A673 (cell line): ENCODE measurements at regions of chr2 and their contacts with region 1.

Region 1: GRCh38 chr2:175726223-175726622 is 275.8 kb downstream of the LNPK start:
- DNase-seq: no peak
- H3K4me3 ChIP-seq: no peak overlapping the region
- H3K27ac ChIP-seq: no peak overlapping the region
- H3K4me1 ChIP-seq: no peaks in the 10 kb centered on the region
- H3K27me3 ChIP-seq: no peaks in the 10 kb centered on the region
- CTCF ChIP-seq: no peak

Region 2: GRCh38 chr2:174827371-174828369 is 898.6 kb before region 1 on chr2:
- CTCF ChIA-PET with region 1: no interaction called
- POLR2A ChIA-PET with region 1: no interaction called
- intact Hi-C with region 1: no loop called
- DNase-seq: no peak
- H3K4me3 ChIP-seq: no peak overlapping the region
- H3K27ac ChIP-seq: no peak overlapping the region
- H3K4me1 ChIP-seq: no peaks in the 10 kb centered on the region
- H3K27me3 ChIP-seq: no peaks in the 10 kb centered on the region
- CTCF ChIP-seq: no peak

Region 3: DNA sequence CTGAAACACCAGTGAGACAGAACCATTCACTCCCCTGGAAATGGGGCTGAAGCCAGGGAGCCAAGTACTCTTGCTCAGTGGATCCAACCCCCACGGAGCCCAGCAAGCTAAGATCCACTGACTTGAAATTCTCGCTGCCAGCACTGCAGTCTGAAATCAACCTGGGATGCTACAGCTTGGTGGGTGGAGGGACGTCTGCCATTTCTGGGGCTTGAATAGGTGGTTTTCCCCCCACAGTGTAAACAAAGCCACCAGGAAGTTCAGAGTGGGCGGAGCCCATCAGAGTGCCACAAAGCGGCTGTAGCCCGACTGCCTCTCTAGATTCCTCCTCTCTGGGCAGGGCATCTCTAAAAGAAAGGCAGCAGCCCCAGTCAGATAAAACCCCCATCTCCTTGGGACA is 17.0 kb before region 1 on chr2:
- CTCF ChIA-PET with region 1: no interaction called
- POLR2A ChIA-PET with region 1: interaction called, 10 read pairs
- intact Hi-C with region 1: no loop called
- DNase-seq: no peak
- H3K4me3 ChIP-seq: no peak overlapping the region
- H3K27ac ChIP-seq: no peak overlapping the region
- H3K4me1 ChIP-seq: no peaks in the 10 kb centered on the region
- H3K27me3 ChIP-seq: peaks cover 2% of the 10 kb centered on the region
- CTCF ChIP-seq: no peak

Region 4: GRCh38 chr2:175755169-175755568 is 28.9 kb after region 1 on chr2:
- CTCF ChIA-PET with region 1: no interaction called
- POLR2A ChIA-PET with region 1: no interaction called
- intact Hi-C with region 1: no loop called
- DNase-seq: no peak
- H3K4me3 ChIP-seq: no peak overlapping the region
- H3K27ac ChIP-seq: no peak overlapping the region
- H3K4me1 ChIP-seq: no peaks in the 10 kb centered on the region
- H3K27me3 ChIP-seq: no peaks in the 10 kb centered on the region
- CTCF ChIP-seq: no peak

Region 5: DNA sequence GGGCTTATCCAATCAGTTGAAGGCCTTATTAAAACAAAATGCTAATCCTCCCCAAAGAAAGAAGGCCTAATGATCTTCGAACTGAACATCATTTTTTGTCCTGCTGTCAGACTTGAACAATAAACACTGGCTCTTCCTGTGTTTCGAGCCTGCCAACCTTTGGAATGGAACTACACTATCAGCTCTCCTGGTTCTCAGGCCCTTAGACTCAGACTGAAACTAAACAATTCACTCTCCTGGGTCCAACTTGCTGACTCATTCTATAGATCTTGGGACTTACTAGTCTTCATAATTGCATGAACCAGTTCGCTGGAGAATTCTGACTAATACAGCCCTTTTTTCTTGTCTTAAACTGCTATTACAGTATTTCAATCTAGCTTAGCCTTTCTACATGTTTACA is 40.7 kb after region 1 on chr2:
- CTCF ChIA-PET with region 1: no interaction called
- POLR2A ChIA-PET with region 1: no interaction called
- intact Hi-C with region 1: no loop called
- DNase-seq: no peak
- H3K4me3 ChIP-seq: no peak overlapping the region
- H3K27ac ChIP-seq: no peak overlapping the region
- H3K4me1 ChIP-seq: no peaks in the 10 kb centered on the region
- H3K27me3 ChIP-seq: no peaks in the 10 kb centered on the region
- CTCF ChIP-seq: no peak

Region 6: GRCh38 chr2:175984846-175985245 is 258.6 kb after region 1 on chr2:
- CTCF ChIA-PET with region 1: no interaction called
- POLR2A ChIA-PET with region 1: no interaction called
- intact Hi-C with region 1: no loop called
- DNase-seq: no peak
- H3K4me3 ChIP-seq: no peak overlapping the region
- H3K27ac ChIP-seq: no peak overlapping the region
- H3K4me1 ChIP-seq: no peaks in the 10 kb centered on the region
- H3K27me3 ChIP-seq: no peaks in the 10 kb centered on the region
- CTCF ChIP-seq: no peak